CD4-positive, alpha-beta memory T cell (primary cell): ENCODE measurements at regions of chr13 and their contacts with region 1.

Region 1: GRCh38 chr13:38582133-38582532 is 104.7 kb upstream of the FREM2 start:
- DNase-seq: peak in 4 of 5 donors; percentile 5 to 9 (median 7)
- H3K4me3 ChIP-seq: no peak overlapping the region
- H3K4me3 Mint-ChIP-seq: no peak overlapping the region
- H3K27ac ChIP-seq: no peak overlapping the region
- H3K27ac Mint-ChIP-seq: no peak overlapping the region
- H3K4me1 ChIP-seq: no peaks in the 10 kb centered on the region
- H3K4me1 Mint-ChIP-seq: no peaks in the 10 kb centered on the region
- H3K27me3 ChIP-seq: no peaks in the 10 kb centered on the region
- H3K27me3 Mint-ChIP-seq: no peaks in the 10 kb centered on the region

Region 2: GRCh38 chr13:37769078-37769477 is 813.1 kb before region 1 on chr13:
- CTCF ChIA-PET with region 1: no interaction called
- POLR2A ChIA-PET with region 1: no interaction called
- intact Hi-C with region 1: loop called (anchors 5 kb)
- DNase-seq: no peak
- H3K4me3 ChIP-seq: no peak overlapping the region
- H3K4me3 Mint-ChIP-seq: no peak overlapping the region
- H3K27ac ChIP-seq: no peak overlapping the region
- H3K27ac Mint-ChIP-seq: no peak overlapping the region
- H3K4me1 ChIP-seq: no peaks in the 10 kb centered on the region
- H3K4me1 Mint-ChIP-seq: no peaks in the 10 kb centered on the region
- H3K27me3 ChIP-seq: no peaks in the 10 kb centered on the region
- H3K27me3 Mint-ChIP-seq: no peaks in the 10 kb centered on the region